ENCODE measurements at regions of chr17 and their contacts with region 1.

Region 1: GRCh38 chr17:42720996-42721583 is 23.8 kb downstream of the EZH1 start:
- DNase-seq: peak; percentile 80
- ATAC-seq: peak; percentile 80
- H3K4me3 ChIP-seq: no peak overlapping the region
- H3K27ac ChIP-seq: no peak overlapping the region
- H3K4me1 ChIP-seq: no peaks in the 10 kb centered on the region
- H3K27me3 ChIP-seq: no peaks in the 10 kb centered on the region
- CTCF ChIP-seq: peak; percentile 75

Region 2: GRCh38 chr17:42566883-42567573 is 154.1 kb before region 1 on chr17 and contains the start of gene MLX:
- CTCF ChIA-PET with region 1: no interaction called
- POLR2A ChIA-PET with region 1: no interaction called
- intact Hi-C with region 1: no loop called
- DNase-seq: peak; percentile 81
- ATAC-seq: peak; percentile 54
- H3K4me3 ChIP-seq: peak within 1 kb of the TSS; percentile 88
- H3K27ac ChIP-seq: peak within 1 kb of the TSS; percentile 30
- H3K4me1 ChIP-seq: peaks cover 21% of the 10 kb centered on the region
- H3K27me3 ChIP-seq: no peaks in the 10 kb centered on the region
- CTCF ChIP-seq: no peak
- total RNA-seq, gene MLX: 25.8 and 26.2 TPM in 2 replicates

Region 3: GRCh38 chr17:42760652-42761581 is 39.8 kb after region 1 on chr17 and contains the start of gene RAMP2:
- CTCF ChIA-PET with region 1: no interaction called
- POLR2A ChIA-PET with region 1: no interaction called
- intact Hi-C with region 1: loop called (anchors 1 kb)
- DNase-seq: no peak
- ATAC-seq: peak; percentile 49
- H3K4me3 ChIP-seq: peak within 1 kb of the TSS; percentile 49; the same call in 1 of the 2 replicates
- H3K27ac ChIP-seq: no peak within 1 kb of the TSS
- H3K4me1 ChIP-seq: no peaks in the 10 kb centered on the region; the same call in 1 of the 2 replicates
- H3K27me3 ChIP-seq: no peaks in the 10 kb centered on the region
- CTCF ChIP-seq: no peak
- total RNA-seq, gene RAMP2: not detected in 2 replicates

Region 4: DNA sequence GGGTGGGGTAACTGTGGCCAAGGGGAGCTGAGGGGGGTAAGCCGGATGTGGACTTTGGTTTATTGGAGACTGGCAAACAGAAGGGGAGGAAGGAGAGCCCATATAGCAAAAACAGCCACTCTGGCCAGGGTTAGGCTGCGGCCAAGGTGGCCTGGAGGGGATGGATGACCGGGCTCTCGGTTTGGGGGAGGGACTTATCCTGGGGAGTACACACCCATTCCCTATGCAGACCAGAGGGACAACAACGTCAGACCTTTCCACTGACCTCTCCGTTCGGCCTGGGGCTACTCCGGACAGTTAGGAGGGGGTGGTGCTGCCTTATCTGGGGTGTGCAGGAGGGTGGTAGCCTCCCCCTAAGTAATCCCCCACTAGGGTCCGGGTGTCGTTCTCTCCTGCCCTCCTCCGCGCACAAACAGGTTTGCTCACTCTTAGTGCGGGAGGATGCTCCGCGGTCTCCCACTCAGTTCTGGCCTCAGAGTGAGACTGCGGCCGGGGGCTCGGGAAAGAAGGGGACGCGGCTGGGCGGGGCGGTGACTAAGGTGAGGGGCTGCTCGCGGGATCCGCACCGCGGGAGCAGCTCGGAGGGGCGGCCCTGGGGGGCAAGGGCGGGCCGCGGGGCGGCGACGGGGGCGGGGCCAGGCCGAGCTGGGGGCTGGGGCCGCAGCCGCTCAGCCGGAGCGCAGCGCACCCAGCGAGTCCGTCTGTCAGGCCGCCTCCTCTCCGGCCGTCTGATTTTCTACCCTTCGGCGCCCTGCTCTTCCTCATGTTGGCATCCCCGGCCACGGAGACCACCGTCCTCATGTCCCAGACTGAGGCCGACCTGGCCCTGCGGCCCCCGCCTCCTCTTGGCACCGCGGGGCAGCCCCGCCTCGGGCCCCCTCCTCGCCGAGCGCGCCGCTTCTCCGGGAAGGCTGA is 59.1 kb after region 1 on chr17 and contains the start of gene WNK4:
- CTCF ChIA-PET with region 1: no interaction called
- POLR2A ChIA-PET with region 1: interaction called, 10 read pairs
- intact Hi-C with region 1: no loop called
- DNase-seq: peak; percentile 81
- ATAC-seq: peak; percentile 76
- H3K4me3 ChIP-seq: peak within 1 kb of the TSS; percentile 99
- H3K27ac ChIP-seq: peak within 1 kb of the TSS; percentile 89
- H3K4me1 ChIP-seq: peaks cover 32% of the 10 kb centered on the region
- H3K27me3 ChIP-seq: no peaks in the 10 kb centered on the region
- CTCF ChIP-seq: no peak
- total RNA-seq, gene WNK4: 13.0 and 17.4 TPM in 2 replicates

Region 5: DNA sequence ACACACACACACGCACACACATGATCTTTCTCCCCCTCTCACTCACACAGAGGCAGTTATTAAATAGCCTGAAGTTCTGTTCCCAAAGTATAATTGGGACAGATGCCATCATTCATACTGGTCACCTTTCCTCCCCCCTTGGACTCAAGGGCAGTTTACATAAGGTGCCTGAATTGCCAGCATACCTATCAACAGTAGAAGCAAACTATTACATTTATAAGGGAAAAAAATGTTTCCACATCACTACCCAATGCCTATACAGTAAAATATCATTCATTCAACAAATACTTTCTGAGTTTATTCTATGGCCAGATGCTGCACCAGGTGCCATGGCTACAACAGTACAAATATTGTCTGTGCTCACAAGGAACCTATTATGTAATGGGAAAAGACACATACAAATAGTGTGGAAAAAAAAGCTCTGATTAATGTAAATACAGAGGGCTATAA is 83.9 kb after region 1 on chr17:
- CTCF ChIA-PET with region 1: no interaction called
- POLR2A ChIA-PET with region 1: interaction called, 10 read pairs
- intact Hi-C with region 1: no loop called
- DNase-seq: peak; percentile 30
- ATAC-seq: peak; percentile 68
- H3K4me3 ChIP-seq: no peak overlapping the region
- H3K27ac ChIP-seq: peak overlapping the region; percentile 29; the same call in 1 of the 2 replicates
- H3K4me1 ChIP-seq: peaks cover 14% of the 10 kb centered on the region
- H3K27me3 ChIP-seq: no peaks in the 10 kb centered on the region
- CTCF ChIP-seq: no peak

Region 6: DNA sequence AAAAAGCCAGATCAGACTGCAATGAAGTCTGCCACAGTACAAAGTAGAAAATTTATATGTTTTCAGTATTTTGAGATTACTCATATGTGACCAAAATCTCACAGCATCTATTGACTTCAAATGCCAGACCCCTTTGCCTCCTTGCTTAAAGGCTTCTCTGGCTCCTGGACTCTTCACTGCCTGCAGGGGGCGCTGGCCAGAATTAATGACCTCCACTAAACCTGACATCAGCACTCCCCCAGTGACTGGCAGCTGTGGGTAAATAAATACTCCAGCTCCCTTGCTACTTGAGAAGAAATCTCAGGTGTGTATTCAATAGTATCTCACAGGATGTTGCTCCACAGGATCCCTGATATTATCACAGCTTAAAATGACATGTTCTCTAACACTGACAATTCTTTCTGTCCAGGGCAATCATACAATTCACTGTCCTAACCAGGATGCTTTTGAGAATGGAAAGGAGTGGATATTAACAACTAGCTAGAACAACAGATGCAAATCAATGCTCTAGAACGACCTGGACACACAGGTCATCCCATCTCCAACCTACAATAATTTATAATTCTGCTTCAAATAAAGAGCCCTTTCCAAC is 99.0 kb after region 1 on chr17:
- CTCF ChIA-PET with region 1: interaction called, 3 read pairs
- POLR2A ChIA-PET with region 1: no interaction called
- intact Hi-C with region 1: loop called (anchors 1 kb)
- DNase-seq: peak; percentile 69
- ATAC-seq: 0 out of 2 replicates have a peak, but pooled peaks have one; percentile 17
- H3K4me3 ChIP-seq: no peak overlapping the region
- H3K27ac ChIP-seq: no peak overlapping the region
- H3K4me1 ChIP-seq: no peaks in the 10 kb centered on the region
- H3K27me3 ChIP-seq: no peaks in the 10 kb centered on the region
- CTCF ChIP-seq: peak; percentile 86

Measured in PC-3 (cell line).